GM10248 (cell line): ENCODE measurements at regions of chr17 and their contacts with region 1.

Region 1: DNA sequence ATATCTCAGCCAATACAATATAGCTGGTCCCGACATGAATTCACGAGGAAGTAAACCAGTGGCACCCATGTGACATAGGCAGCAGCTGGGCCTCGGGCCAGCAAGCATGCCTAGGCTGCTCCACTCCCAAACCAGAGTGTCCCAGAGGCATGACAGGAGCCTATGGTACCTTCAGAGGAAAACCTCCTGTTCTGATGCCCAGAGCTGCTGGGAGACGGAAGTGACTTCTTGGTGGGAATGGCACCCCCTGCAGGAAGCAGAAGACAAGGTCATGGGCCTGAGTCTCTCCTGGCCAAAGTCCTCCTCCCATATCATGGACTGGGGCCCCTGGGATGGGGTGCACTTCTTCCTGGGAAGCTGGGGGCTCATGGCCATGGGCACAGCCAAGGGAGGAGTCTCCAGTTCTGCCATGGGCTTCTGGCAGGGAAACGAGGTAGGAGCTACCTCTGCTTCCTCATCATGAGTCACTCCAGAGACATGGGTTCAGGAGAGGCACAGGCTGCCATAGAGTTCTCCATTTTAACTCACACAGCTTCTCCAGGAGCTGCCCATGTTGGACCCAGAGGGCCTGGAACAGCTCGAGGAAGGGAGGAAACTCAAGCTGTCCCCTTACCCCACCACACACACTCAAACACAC is 13.4 kb downstream of the FBF1 start:
- DNase-seq: peak; percentile 65
- CTCF ChIP-seq: peak; percentile 24

Region 2: GRCh38 chr17:75812096-75812935 is 115.1 kb before region 1 on chr17:
- CTCF ChIA-PET with region 1: no interaction called
- POLR2A ChIA-PET with region 1: no interaction called
- DNase-seq: no peak
- CTCF ChIP-seq: no peak

Region 3: GRCh38 chr17:75904749-75905521 is 22.5 kb before region 1 on chr17 and contains the start of gene MRPL38:
- CTCF ChIA-PET with region 1: interaction called, 28 read pairs
- POLR2A ChIA-PET with region 1: no interaction called
- DNase-seq: peak; percentile 99
- CTCF ChIP-seq: peak; percentile 87

Region 4: GRCh38 chr17:75914643-75915267 is 12.6 kb before region 1 on chr17:
- CTCF ChIA-PET with region 1: interaction called, 27 read pairs
- POLR2A ChIA-PET with region 1: interaction called, 6 read pairs
- DNase-seq: no peak
- CTCF ChIP-seq: no peak